ENCODE measurements at regions of chr15 and their contacts with region 1.

Region 1: DNA sequence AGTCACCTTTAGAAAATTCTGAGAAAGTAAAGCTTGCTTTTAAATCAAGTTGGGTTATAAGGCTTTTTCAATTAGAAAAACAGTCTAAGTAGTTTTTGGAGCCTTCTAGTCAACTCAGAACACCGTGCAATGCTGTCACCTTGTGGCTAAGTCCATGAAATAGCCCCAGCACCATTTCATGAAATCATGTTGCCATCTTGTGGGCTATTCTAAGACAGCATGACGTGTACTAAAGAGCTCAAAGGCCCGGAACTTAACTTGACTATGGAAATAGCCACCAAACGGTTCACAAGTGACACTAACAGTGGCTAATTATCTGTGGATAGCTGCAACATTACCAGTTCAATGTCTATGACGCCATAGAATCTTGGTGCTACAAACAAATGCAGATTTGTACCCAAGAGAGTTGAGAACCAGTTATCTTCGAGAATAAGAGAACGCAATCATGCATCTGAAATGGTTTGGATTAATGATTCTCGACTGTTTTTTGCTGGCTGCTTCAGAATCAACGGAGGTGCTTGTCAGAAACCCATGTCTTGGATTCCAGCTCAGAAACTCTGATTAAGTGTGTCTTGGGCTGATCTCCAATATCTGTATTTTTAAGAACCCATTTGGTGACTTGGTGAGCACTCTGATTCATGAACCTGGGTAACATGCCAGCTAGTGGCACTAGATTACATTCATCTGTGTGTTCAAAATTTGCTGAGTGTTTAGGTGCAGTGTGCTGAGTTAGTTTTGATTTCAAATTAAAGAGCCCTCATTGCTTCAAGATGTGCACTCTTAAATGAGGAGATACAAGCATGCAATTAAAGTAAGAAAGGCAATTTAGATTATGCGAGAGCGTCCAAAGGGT is 111.2 kb upstream of the MCTP2 start:
- DNase-seq: peak; percentile 65
- H3K4me3 ChIP-seq: no peak overlapping the region
- H3K27ac ChIP-seq: no peak overlapping the region
- H3K4me1 ChIP-seq: no peaks in the 10 kb centered on the region
- H3K27me3 ChIP-seq: no peaks in the 10 kb centered on the region
- CTCF ChIP-seq: peak; percentile 87

Region 2: DNA sequence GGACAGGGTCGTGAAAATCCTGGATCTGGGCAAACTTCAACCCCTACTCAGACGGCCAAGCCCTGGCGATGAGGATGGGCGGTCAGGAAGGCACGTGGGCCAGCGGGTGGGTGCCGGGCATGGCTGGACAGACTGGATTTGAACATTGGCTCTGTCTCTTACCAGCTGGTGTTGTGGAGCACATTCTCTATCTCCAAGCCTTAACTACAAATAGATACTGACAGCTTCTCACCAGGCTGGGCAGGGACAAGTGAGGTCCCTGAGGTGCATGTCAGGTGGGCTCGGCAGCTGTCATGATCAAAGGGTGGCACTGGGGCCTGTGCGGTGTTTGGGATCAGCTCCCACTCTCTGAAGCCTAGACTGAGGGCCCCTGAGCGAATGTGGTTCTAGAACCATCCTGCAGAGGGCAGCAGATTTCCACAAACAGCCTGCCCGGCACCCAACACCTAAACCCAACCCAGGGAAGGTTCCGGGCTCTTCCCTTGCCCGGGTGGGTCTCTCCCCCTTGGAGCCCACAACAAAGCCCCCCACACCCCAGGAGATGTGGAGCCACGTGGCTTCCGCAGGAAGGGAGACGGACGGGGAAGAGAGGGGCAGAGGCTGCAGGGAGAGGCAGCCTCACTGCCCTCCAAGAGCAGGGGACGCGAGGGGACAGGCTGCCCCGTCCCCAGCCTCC is 1089.6 kb before region 1 on chr15:
- intact Hi-C with region 1: loop called (anchors 5 kb)
- DNase-seq: peak; percentile 73
- H3K4me3 ChIP-seq: no peak overlapping the region
- H3K27ac ChIP-seq: peak overlapping the region; percentile 70
- H3K4me1 ChIP-seq: peaks cover 7% of the 10 kb centered on the region
- H3K27me3 ChIP-seq: no peaks in the 10 kb centered on the region
- CTCF ChIP-seq: peak; percentile 82

Region 3: DNA sequence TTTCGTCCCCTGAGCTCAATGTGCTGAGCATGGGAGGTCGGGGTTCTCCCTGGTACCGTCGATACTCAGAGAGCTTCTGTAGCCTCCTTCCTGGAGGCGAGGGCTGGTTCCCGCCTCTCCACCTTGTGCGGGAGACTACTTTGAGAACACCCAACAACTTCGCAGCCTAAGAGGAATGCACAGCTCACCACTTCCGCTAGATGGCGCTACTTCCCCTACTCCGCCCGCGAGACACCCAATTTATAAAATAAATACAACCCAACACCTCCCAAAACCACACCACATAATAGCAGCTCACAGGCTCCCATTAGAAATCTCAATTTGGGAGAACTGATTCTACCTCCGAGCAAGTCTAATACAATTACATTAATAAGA is 1032.3 kb before region 1 on chr15:
- intact Hi-C with region 1: loop called (anchors 5 kb)
- DNase-seq: peak; percentile 78
- H3K4me3 ChIP-seq: peak overlapping the region; percentile 48
- H3K27ac ChIP-seq: peak overlapping the region; percentile 22
- H3K4me1 ChIP-seq: peaks cover 8% of the 10 kb centered on the region
- H3K27me3 ChIP-seq: peaks cover 43% of the 10 kb centered on the region
- CTCF ChIP-seq: peak; percentile 81

Region 4: GRCh38 chr15:93997084-93997918 is 122.8 kb before region 1 on chr15:
- intact Hi-C with region 1: loop called (anchors 5 kb)
- DNase-seq: no peak
- H3K4me3 ChIP-seq: no peak overlapping the region
- H3K27ac ChIP-seq: no peak overlapping the region
- H3K4me1 ChIP-seq: no peaks in the 10 kb centered on the region
- H3K27me3 ChIP-seq: no peaks in the 10 kb centered on the region
- CTCF ChIP-seq: peak; percentile 70